ENCODE measurements at regions of chr13 and their contacts with region 1.

Region 1: DNA sequence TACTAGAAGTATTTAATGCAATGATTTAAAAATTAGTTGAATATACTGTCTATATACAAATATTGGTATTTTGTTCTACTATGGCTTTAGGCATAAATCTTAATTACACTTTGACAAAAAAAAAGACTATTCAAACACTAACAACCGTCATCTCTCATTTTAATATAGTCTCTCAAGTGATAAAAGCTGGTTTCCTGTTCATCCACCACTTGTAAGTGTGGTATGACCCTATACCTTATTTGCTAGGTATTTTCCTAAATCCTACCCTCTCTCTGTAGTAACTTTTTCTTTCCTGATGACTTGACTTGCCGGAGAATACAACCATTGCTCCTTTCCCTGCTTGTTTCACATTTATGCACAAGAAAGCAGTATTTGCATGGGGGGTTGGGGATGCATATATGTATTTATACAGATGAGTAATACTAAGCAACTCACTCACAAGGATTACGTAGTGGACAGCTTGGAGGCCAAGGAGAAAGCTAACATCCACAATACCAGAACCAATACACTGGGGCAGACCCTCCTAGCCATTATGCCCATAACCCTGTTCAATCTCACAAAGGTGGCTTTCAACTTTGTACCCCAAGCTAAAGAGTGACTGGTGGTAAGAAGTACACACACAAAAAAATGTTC is 12.7 kb upstream of the EFNB2 start:
- DNase-seq: no peak
- H3K4me3 ChIP-seq: no peak overlapping the region
- H3K27ac ChIP-seq: no peak overlapping the region
- H3K4me1 ChIP-seq: no peaks in the 10 kb centered on the region
- H3K27me3 ChIP-seq: no peaks in the 10 kb centered on the region
- CTCF ChIP-seq: no peak

Region 2: DNA sequence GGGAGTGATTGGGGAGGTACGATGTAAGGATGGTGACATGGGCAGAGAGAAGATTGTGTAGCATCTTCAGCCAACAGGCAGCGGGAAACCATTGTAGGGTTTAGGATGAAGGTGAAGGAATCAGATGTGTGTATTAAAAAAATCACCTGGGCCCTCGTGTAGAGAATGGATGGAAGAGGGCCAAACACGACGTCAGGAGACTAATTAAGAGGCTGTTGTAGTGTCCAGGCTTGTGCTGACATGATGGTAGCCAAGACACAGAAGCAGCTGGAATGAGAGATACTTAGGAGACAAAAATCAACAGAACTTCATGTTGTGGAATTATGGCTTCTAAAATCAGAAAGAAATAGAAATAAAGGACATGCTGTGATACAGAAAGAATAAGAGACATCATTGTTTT is 60.9 kb after region 1 on chr13:
- intact Hi-C with region 1: loop called (anchors 5 kb)
- DNase-seq: no peak
- H3K4me3 ChIP-seq: no peak overlapping the region
- H3K27ac ChIP-seq: no peak overlapping the region
- H3K4me1 ChIP-seq: no peaks in the 10 kb centered on the region
- H3K27me3 ChIP-seq: no peaks in the 10 kb centered on the region
- CTCF ChIP-seq: no peak

Region 3: DNA sequence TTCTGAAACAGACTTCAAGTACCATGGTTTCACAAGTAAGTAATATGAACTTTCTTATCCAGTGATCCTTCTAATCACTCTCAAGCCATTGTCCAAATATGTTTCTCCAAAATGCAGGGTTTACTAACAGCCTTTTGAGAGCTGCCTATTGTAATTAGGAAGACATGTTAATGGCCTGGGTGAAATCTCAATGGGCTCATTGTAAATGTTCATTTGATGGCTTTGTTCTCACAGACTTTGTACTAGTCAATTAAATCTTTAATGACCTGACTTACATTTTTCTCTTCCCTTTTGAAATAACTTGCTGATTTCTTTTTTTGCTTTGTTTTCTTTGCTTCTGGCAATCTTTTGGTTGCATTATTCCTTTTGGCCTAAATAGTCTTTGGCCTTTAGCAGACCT is 1222.4 kb after region 1 on chr13:
- intact Hi-C with region 1: no loop called
- DNase-seq: no peak
- H3K4me3 ChIP-seq: no peak overlapping the region
- H3K27ac ChIP-seq: no peak overlapping the region
- H3K4me1 ChIP-seq: no peaks in the 10 kb centered on the region
- H3K27me3 ChIP-seq: no peaks in the 10 kb centered on the region
- CTCF ChIP-seq: no peak